A549 (cell line): ENCODE measurements at regions of chr7 and their contacts with region 1.

Region 1: GRCh38 chr7:45259966-45260646 is 102.5 kb downstream of the RAMP3 start:
- DNase-seq: peak; percentile 39 to 60
- ATAC-seq: peak; percentile 82 to 96
- H3K4me3 ChIP-seq: no peak overlapping the region
- H3K27ac ChIP-seq: no peak overlapping the region
- H3K4me1 ChIP-seq: no peaks in the 10 kb centered on the region
- CTCF ChIP-seq: peak; percentile 88
- EP300 ChIP-seq: no peak
- POLR2A ChIP-seq: no peak
- RAD21 ChIP-seq: peak; percentile 87 to 89

Region 2: DNA sequence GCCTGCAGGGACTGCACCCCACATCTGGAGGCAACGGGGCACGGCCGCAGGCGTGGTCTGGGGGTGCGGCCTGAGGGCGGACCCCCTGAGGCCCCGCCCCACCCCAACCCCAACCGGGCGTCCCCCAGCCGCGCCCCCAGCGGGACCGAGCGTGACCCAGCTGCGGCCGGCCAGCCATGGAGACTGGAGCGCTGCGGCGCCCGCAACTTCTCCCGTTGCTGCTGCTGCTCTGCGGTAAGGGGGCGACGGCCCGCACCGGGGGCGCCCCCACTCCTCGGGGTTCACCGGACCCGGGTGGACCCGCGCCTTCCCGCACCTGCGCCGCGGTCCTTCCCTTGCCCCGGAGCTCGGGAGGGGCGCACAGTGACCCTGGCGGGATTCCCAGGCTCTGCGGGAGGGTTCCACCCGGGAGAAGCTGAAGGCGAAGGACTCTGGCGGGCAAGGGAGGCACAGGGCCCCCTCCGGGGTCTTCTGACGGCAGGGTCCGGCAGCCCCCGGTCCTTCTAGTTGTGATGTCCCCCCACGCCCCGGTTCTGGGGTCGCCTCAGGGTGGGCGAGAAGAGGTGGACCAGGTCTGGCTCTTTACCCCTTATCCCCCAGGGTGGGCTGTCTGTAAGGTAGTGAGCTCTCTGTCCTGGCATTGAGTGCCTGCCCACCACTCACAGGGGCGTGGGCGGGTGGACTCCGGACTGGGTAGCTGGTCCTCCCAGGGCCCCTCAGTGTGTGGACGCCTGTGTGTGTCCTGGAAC is 102.3 kb before region 1 on chr7 and contains the start of gene RAMP3:
- CTCF ChIA-PET with region 1: interaction called, 112 read pairs
- POLR2A ChIA-PET with region 1: no interaction called
- DNase-seq: no peak
- ATAC-seq: no peak
- H3K4me3 ChIP-seq: 0 out of 3 replicates have a peak within 1 kb of the TSS, but pooled peaks have one; percentile 20
- H3K27ac ChIP-seq: peak within 1 kb of the TSS in 1 of 2 experiments; percentile 31; a peak in 1 of 6 replicates
- H3K4me1 ChIP-seq: 0 out of 3 replicates have a peak, but pooled peaks cover 6% of the 10 kb centered on the region
- CTCF ChIP-seq: no peak
- EP300 ChIP-seq: no peak
- POLR2A ChIP-seq: no peak
- RAD21 ChIP-seq: no peak
- polyA plus RNA-seq, gene RAMP3: not detected in 2 replicates

Region 3: DNA sequence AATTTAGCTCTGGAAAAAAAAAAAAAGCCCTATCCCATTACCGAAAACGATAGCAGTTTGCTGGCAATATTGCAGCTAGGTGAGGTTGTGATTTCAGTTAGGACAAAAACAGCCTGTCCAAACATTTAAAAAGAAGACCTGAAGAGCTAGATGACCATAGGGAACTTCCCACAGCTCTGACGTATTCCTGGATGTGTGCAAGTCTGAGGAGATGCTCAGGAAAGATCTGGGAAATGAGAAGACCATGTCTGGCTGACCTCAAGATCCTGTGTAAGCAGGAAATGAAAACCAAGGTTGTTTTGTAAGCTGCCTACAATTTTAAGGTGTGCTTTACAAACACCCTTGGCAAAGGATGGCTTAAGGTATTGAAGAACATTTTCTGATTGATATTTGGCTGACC is 13.8 kb before region 1 on chr7:
- CTCF ChIA-PET with region 1: interaction called, 21 read pairs
- POLR2A ChIA-PET with region 1: no interaction called
- DNase-seq: no peak
- ATAC-seq: no peak
- H3K4me3 ChIP-seq: no peak overlapping the region
- H3K27ac ChIP-seq: no peak overlapping the region
- H3K4me1 ChIP-seq: 0 out of 3 replicates have a peak, but pooled peaks cover 2% of the 10 kb centered on the region
- CTCF ChIP-seq: no peak
- EP300 ChIP-seq: no peak
- POLR2A ChIP-seq: no peak
- RAD21 ChIP-seq: no peak